Activated CD8-positive, alpha-beta memory T cell treated with anti-CD3 and anti-CD28 coated beads, Interleukin-2, amount 10 ng/mL, durations not matched to agents 7 days and 5 days (primary cell): ENCODE measurements at regions of chr11 and their contacts with region 1.

Region 1: DNA sequence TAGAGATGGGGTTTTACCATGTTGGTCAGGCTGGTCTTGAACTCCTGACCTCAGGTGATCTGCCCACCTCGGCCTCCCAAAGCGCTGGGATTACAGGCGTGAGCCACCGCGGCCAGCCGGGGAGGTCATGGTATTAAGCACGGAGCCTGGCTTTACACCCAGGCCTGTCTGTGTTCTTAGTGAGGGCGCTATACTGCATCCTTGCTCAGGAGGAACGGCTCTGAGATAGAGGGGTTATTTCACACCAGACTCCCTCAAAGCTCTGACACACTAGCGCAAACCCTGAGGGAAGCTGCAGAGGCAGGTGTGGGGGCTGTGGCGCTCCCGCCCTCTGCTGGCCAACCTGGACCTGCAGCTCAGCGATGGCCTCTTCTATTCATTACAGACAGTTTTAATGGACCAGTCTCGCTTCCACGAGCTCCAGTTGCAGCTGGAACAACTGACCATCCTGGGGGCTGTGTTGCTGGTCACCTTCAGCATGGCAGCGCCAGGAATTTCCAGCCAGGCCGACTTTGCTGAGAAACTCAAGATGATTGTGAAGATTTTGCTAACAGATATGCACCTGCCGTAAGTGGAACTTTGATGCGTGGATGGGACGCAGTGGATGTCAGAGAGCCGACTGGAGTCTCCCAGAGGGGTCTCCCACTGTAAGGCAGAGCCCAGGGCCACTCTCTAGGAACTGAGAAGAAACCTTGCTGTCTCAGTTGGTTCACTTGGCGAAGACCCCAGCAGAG is 26.2 kb downstream of the TCP11L1 start:
- DNase-seq: peak; percentile 77
- ATAC-seq: peak; percentile 84
- H3K4me3 Mint-ChIP-seq: no peak overlapping the region
- H3K27ac Mint-ChIP-seq: no peak overlapping the region
- H3K4me1 Mint-ChIP-seq: peaks cover 32% of the 10 kb centered on the region
- H3K27me3 Mint-ChIP-seq: no peaks in the 10 kb centered on the region

Region 2: GRCh38 chr11:32960553-32961164 is 105.0 kb before region 1 on chr11:
- CTCF ChIA-PET with region 1: interaction called, 70 read pairs
- DNase-seq: no peak
- ATAC-seq: peak; percentile 49
- H3K4me3 Mint-ChIP-seq: no peak overlapping the region
- H3K27ac Mint-ChIP-seq: no peak overlapping the region
- H3K4me1 Mint-ChIP-seq: peaks cover 10% of the 10 kb centered on the region
- H3K27me3 Mint-ChIP-seq: no peaks in the 10 kb centered on the region

Region 3: GRCh38 chr11:32968541-32968940 is 97.1 kb before region 1 on chr11:
- CTCF ChIA-PET with region 1: interaction called, 70 read pairs
- DNase-seq: no peak
- ATAC-seq: no peak
- H3K4me3 Mint-ChIP-seq: no peak overlapping the region
- H3K27ac Mint-ChIP-seq: no peak overlapping the region
- H3K4me1 Mint-ChIP-seq: peaks cover 5% of the 10 kb centered on the region
- H3K27me3 Mint-ChIP-seq: no peaks in the 10 kb centered on the region

Region 4: GRCh38 chr11:33015621-33016551 is 49.7 kb before region 1 on chr11 and contains the start of gene DEPDC7:
- CTCF ChIA-PET with region 1: interaction called, 10 read pairs
- DNase-seq: peak; percentile 79
- ATAC-seq: peak; percentile 86
- H3K4me3 Mint-ChIP-seq: peak within 1 kb of the TSS; percentile 70
- H3K27ac Mint-ChIP-seq: peak within 1 kb of the TSS; percentile 3
- H3K4me1 Mint-ChIP-seq: peaks cover 22% of the 10 kb centered on the region
- H3K27me3 Mint-ChIP-seq: peaks cover 52% of the 10 kb centered on the region
- total RNA-seq, gene DEPDC7: 1.6 to 2.3 TPM

Region 5: GRCh38 chr11:33052231-33052630 is 13.4 kb before region 1 on chr11:
- CTCF ChIA-PET with region 1: interaction called, 13 read pairs
- DNase-seq: no peak
- ATAC-seq: no peak
- H3K4me3 Mint-ChIP-seq: no peak overlapping the region
- H3K27ac Mint-ChIP-seq: no peak overlapping the region
- H3K4me1 Mint-ChIP-seq: no peaks in the 10 kb centered on the region
- H3K27me3 Mint-ChIP-seq: no peaks in the 10 kb centered on the region

Region 6: DNA sequence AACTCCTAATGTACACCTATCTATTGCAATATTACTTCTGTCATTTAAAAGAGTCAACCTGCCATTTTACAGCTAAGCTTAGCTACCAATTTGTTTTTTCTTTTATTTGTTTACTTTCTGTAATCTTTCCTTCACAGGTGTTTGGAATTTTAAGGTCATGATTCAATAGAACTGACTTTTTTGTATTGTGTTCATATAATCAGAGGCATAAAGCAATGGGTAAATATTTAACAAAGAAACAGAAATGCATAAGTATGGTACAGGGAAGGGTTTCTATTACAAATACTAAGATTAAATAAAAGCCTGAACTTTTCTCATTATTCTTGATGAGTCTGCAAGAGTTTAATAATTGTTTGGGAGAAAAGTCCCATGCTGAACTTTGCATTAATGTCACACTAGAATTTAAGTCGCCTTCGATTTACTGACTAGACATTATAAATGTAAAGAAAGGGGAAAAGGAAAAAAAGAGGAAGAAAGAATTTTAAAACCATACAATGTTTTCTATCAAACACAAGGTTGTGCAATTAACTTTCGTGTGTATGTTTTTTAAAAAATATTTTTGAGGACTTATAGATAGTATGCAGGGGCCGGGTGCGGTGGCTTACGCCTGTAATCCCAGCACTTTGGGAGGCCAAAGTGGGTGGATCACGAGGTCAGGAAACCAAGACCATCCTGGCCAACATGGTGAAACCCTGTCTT is 156.6 kb after region 1 on chr11:
- CTCF ChIA-PET with region 1: no interaction called
- DNase-seq: no peak
- ATAC-seq: no peak
- H3K4me3 Mint-ChIP-seq: no peak overlapping the region
- H3K27ac Mint-ChIP-seq: no peak overlapping the region
- H3K4me1 Mint-ChIP-seq: no peaks in the 10 kb centered on the region
- H3K27me3 Mint-ChIP-seq: no peaks in the 10 kb centered on the region